CD8-positive, alpha-beta T cell (primary cell): ENCODE measurements at regions of chrX and their contacts with region 1.

Region 1: DNA sequence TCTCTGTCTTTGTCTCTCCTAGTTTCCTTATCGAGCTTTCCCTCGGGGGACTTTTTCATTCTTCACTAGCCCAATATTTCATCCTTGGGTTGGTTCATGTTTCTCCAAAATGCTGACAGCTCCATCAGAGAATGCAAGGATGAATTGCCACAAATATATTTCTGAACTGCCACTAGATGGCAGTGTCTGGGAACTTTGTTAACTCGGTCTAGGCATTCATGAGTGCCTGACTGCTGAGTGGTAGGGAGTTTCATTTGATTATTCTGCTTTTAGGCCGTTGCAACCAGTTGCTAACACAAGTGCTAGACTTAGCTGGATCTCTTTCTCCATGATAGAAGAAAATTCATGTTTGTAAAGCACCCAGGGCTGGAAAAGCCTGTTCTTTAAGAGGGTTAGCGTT is 73.5 kb upstream of the RAP2C start:
- DNase-seq: peak in 7 of 9 experiments; percentile 0 to 65 (median 26)
- ATAC-seq: no peak
- H3K4me3 ChIP-seq: no peak overlapping the region
- H3K4me3 Mint-ChIP-seq: no peak overlapping the region
- H3K27ac ChIP-seq: no peak overlapping the region
- H3K27ac Mint-ChIP-seq: no peak overlapping the region
- H3K4me1 ChIP-seq: no peaks in the 10 kb centered on the region
- H3K4me1 Mint-ChIP-seq: no peaks in the 10 kb centered on the region
- H3K27me3 ChIP-seq: no peaks in the 10 kb centered on the region
- H3K27me3 Mint-ChIP-seq: no peaks in the 10 kb centered on the region
- CTCF ChIP-seq: peak; percentile 42

Region 2: DNA sequence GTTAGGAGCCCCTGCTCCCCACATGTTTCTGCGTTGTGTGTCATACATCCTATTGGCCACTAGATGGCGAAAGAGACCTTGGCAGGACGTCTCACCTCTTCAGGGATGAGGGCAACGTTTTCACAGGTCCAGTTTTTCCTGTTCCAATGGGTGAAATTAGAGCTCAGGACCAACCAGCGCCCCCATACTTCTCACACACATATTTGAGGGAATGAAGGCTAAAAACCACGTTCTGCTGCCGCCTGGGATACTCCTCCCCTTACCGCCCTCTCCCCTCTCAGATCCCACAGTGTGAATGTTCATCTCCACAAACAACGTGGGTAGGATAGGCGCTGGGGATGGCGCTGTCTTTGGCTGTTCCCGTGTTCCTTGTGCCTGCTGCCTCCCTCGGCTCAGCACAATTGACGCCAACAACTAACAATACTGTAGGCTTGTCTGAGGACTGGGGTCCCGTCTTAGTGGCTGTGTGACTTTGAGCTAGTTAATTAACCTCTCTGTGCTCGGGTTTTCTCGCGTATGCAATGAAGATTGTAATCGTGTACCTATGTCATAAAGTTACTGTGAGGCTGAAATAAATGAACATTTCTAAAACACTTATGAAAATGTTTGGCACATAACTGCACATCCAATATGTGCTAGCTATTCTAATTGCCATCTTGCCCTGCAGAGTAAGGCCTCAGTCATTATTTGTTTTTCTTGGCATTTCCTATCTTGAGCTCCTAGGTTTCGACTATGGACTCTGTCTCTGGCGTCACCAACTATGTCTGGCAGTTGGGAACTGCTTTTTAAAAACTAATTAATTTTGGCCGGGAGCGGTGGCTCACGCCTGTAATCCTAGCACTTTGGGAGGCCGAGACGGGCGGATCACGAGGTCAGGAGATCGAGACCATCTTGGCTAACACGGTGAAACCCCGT is 451.0 kb before region 1 on chrX:
- CTCF ChIA-PET with region 1: interaction called, 5 read pairs
- POLR2A ChIA-PET with region 1: no interaction called
- intact Hi-C with region 1: loop called in 1 of 2 experiments (anchors 10 kb)
- DNase-seq: peak in 5 of 9 experiments; percentile 13 to 68 (median 55)
- ATAC-seq: peak; percentile 46
- H3K4me3 ChIP-seq: no peak overlapping the region
- H3K4me3 Mint-ChIP-seq: no peak overlapping the region
- H3K27ac ChIP-seq: no peak overlapping the region
- H3K27ac Mint-ChIP-seq: no peak overlapping the region
- H3K4me1 ChIP-seq: no peaks in the 10 kb centered on the region
- H3K4me1 Mint-ChIP-seq: no peaks in the 10 kb centered on the region
- H3K27me3 ChIP-seq: no peaks in the 10 kb centered on the region
- H3K27me3 Mint-ChIP-seq: no peaks in the 10 kb centered on the region
- CTCF ChIP-seq: peak; percentile 69

Region 3: DNA sequence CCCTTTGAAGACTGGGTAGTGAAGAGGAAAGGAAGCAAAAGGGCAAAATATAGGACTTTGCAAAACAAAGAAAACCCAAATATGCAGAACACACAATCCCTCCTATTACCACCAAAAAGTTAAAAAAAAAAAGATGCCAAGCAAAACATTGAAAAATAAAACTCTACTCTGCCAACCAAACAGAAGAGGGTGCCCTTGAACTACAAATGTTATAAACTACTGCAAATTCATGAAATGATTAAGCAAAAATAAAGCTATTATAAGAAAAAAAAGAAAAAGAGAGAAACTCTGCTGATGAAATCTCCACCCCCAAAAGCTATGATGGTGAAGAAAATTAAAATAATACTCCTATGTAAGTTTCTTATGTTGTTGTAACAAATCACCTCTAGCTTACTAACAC is 438.2 kb before region 1 on chrX:
- CTCF ChIA-PET with region 1: no interaction called
- POLR2A ChIA-PET with region 1: no interaction called
- intact Hi-C with region 1: loop called (anchors 1 to 10 kb)
- DNase-seq: peak in 2 of 9 experiments; percentile 38 to 50
- ATAC-seq: no peak
- H3K4me3 ChIP-seq: no peak overlapping the region
- H3K4me3 Mint-ChIP-seq: no peak overlapping the region
- H3K27ac ChIP-seq: no peak overlapping the region
- H3K27ac Mint-ChIP-seq: no peak overlapping the region
- H3K4me1 ChIP-seq: no peaks in the 10 kb centered on the region
- H3K4me1 Mint-ChIP-seq: no peaks in the 10 kb centered on the region
- H3K27me3 ChIP-seq: no peaks in the 10 kb centered on the region
- H3K27me3 Mint-ChIP-seq: no peaks in the 10 kb centered on the region
- CTCF ChIP-seq: no peak

Region 4: DNA sequence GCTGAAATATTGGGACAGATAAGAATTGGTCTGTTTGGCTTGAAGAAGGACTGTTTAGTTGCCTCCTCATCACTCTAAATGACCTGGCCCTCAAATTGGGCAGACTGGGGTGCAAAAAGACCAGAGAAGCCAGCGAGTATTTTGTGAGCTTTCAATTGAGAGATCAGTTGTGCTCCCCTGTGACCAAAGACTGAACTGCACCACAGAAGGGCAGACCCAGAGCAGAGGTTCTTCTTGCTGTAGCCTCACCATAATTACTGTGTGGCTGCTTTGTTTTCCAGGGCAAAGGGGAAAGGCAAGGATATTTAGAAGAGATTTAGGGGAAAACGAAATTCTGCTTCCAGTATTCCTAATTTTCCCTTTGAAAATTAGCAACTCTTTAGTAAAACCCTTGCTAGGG is 300.1 kb after region 1 on chrX:
- CTCF ChIA-PET with region 1: interaction called, 5 read pairs
- POLR2A ChIA-PET with region 1: no interaction called
- intact Hi-C with region 1: loop called (anchors 2 to 5 kb)
- DNase-seq: peak in 2 of 9 experiments; percentile 17 to 30
- ATAC-seq: no peak
- H3K4me3 ChIP-seq: no peak overlapping the region
- H3K4me3 Mint-ChIP-seq: no peak overlapping the region
- H3K27ac ChIP-seq: no peak overlapping the region
- H3K27ac Mint-ChIP-seq: no peak overlapping the region
- H3K4me1 ChIP-seq: no peaks in the 10 kb centered on the region
- H3K4me1 Mint-ChIP-seq: no peaks in the 10 kb centered on the region
- H3K27me3 ChIP-seq: no peaks in the 10 kb centered on the region
- H3K27me3 Mint-ChIP-seq: no peaks in the 10 kb centered on the region
- CTCF ChIP-seq: no peak

Region 5: DNA sequence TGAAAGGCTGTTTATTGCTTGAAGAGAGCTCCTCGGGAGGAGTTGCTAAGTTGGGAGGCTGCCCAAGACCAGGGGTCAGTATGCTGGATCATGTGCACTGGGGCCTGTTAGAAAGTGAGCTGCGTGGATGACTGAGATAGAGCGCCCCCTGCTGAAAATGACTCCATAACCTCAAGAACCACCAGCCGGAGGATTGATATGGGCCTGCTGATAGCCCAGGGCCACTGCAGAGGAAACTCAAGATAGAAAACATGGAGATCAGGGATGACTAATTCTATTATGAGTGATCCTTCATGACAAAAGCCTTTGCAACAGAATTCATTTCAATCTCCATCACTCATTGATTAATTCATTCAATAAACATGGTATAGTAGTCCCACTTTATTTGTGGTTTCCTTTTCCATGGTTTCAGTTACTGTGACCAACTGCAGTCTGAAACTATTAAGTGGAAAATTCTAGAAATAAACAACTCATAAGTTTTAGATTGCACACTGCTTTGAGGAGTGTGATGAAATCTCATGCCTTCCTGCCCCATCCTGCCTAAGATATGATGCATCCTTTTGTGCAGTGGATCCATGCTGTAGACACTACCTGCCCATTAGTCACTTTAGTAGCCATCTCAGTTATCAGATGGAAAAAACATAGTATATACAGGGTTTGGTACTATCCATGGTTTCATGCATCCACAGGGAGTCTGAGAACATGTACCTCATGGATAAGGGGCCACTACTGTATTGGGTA is 322.8 kb after region 1 on chrX:
- CTCF ChIA-PET with region 1: interaction called, 81 read pairs
- POLR2A ChIA-PET with region 1: no interaction called
- intact Hi-C with region 1: loop called (anchors 1 kb)
- DNase-seq: peak in 8 of 9 experiments; percentile 21 to 64 (median 41)
- ATAC-seq: no peak
- H3K4me3 ChIP-seq: no peak overlapping the region
- H3K4me3 Mint-ChIP-seq: no peak overlapping the region
- H3K27ac ChIP-seq: no peak overlapping the region
- H3K27ac Mint-ChIP-seq: no peak overlapping the region
- H3K4me1 ChIP-seq: no peaks in the 10 kb centered on the region
- H3K4me1 Mint-ChIP-seq: no peaks in the 10 kb centered on the region
- H3K27me3 ChIP-seq: no peaks in the 10 kb centered on the region
- H3K27me3 Mint-ChIP-seq: no peaks in the 10 kb centered on the region
- CTCF ChIP-seq: peak; percentile 15

Region 6: GRCh38 chrX:132622130-132622529 is 329.3 kb after region 1 on chrX:
- CTCF ChIA-PET with region 1: interaction called, 81 read pairs
- POLR2A ChIA-PET with region 1: no interaction called
- intact Hi-C with region 1: no loop called
- DNase-seq: peak in 1 of 9 experiments; percentile 10
- ATAC-seq: no peak
- H3K4me3 ChIP-seq: no peak overlapping the region
- H3K4me3 Mint-ChIP-seq: no peak overlapping the region
- H3K27ac ChIP-seq: no peak overlapping the region
- H3K27ac Mint-ChIP-seq: no peak overlapping the region
- H3K4me1 ChIP-seq: no peaks in the 10 kb centered on the region
- H3K4me1 Mint-ChIP-seq: no peaks in the 10 kb centered on the region
- H3K27me3 ChIP-seq: no peaks in the 10 kb centered on the region
- H3K27me3 Mint-ChIP-seq: no peaks in the 10 kb centered on the region
- CTCF ChIP-seq: no peak

Region 7: GRCh38 chrX:132631579-132632232 is 338.9 kb after region 1 on chrX:
- CTCF ChIA-PET with region 1: interaction called, 17 read pairs
- POLR2A ChIA-PET with region 1: no interaction called
- intact Hi-C with region 1: loop called (anchors 1 to 5 kb)
- DNase-seq: peak in 2 of 9 experiments; percentile 40 to 56
- ATAC-seq: peak; percentile 48
- H3K4me3 ChIP-seq: no peak overlapping the region
- H3K4me3 Mint-ChIP-seq: no peak overlapping the region
- H3K27ac ChIP-seq: no peak overlapping the region
- H3K27ac Mint-ChIP-seq: no peak overlapping the region
- H3K4me1 ChIP-seq: no peaks in the 10 kb centered on the region
- H3K4me1 Mint-ChIP-seq: no peaks in the 10 kb centered on the region
- H3K27me3 ChIP-seq: no peaks in the 10 kb centered on the region
- H3K27me3 Mint-ChIP-seq: peaks cover 2% of the 10 kb centered on the region
- CTCF ChIP-seq: peak; percentile 28